Activated CD4-positive, alpha-beta T cell treated with anti-CD3 and anti-CD28 coated beads, Interleukin-2, amount 10 ng/mL, durations not matched to agents 24 days and 14 days (primary cell): ENCODE measurements at regions of chr5 and their contacts with region 1.

Region 1: GRCh38 chr5:150350524-150351344 is 6.8 kb upstream of the TCOF1 start:
- DNase-seq: peak; percentile 85
- H3K4me3 Mint-ChIP-seq: no peak overlapping the region
- H3K27ac Mint-ChIP-seq: peak overlapping the region; percentile 39
- H3K4me1 Mint-ChIP-seq: peaks cover 11% of the 10 kb centered on the region
- H3K27me3 Mint-ChIP-seq: peaks cover 11% of the 10 kb centered on the region

Region 2: GRCh38 chr5:150129813-150130492 is 220.8 kb before region 1 on chr5:
- intact Hi-C with region 1: loop called (anchors 1 kb)
- DNase-seq: peak; percentile 86
- H3K4me3 Mint-ChIP-seq: no peak overlapping the region
- H3K27ac Mint-ChIP-seq: no peak overlapping the region
- H3K4me1 Mint-ChIP-seq: peaks cover 2% of the 10 kb centered on the region
- H3K27me3 Mint-ChIP-seq: no peaks in the 10 kb centered on the region

Region 3: DNA sequence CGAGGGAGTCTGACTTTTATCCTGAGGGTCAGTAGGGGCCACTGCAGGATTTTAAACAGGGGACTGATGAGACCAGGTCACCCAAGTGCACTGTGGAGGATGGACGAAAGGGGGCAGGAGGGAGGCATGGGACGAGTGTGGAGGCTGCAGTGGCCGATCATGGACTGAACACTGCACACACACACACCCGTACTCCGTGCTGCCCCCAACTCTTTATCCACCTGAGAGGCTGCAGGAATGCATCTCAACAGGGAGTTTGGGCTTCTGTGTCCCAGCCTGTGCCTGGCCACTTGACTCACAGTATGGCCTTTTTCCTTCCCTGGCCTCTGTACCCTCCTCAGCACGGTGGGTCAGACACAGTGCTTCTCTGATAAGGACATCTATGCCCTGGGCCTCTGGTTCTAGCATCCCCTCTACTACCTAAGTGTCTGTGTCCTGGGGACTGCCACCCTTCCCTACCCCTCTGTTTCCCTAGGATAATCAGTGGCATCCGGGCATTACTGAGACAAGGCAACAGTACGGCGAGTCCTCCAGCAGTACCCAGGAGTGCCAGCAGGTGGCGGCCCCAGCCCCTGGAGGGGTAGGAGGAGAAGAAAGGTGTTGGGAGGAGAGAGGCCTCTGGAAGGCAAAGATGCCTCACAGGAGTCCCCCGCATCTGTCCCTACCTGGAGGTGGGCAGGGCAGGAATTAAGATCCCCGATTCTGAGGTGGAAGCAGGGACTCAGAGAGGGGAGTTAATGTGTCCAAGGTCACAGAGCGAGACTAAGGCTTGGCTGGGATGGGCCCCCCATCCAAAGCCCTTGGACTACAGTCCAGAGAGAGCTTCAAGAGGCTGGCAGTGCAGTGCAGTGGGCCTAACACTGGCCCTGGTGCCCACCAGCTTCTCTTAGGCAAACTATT is 189.2 kb before region 1 on chr5:
- intact Hi-C with region 1: loop called (anchors 1 kb)
- DNase-seq: peak; percentile 94
- H3K4me3 Mint-ChIP-seq: no peak overlapping the region
- H3K27ac Mint-ChIP-seq: no peak overlapping the region
- H3K4me1 Mint-ChIP-seq: peaks cover 3% of the 10 kb centered on the region
- H3K27me3 Mint-ChIP-seq: peaks cover 30% of the 10 kb centered on the region

Region 4: GRCh38 chr5:150234576-150235499 is 115.9 kb before region 1 on chr5:
- intact Hi-C with region 1: no loop called
- DNase-seq: no peak
- H3K4me3 Mint-ChIP-seq: no peak overlapping the region
- H3K27ac Mint-ChIP-seq: no peak overlapping the region
- H3K4me1 Mint-ChIP-seq: no peaks in the 10 kb centered on the region
- H3K27me3 Mint-ChIP-seq: no peaks in the 10 kb centered on the region